ENCODE measurements at regions of chr17 and their contacts with region 1.

Region 1: GRCh38 chr17:46876353-46876887 is 25.0 kb downstream of the WNT9B start:
- DNase-seq: peak; percentile 62
- ATAC-seq: peak; percentile 93
- H3K4me3 Mint-ChIP-seq: no peak overlapping the region
- H3K27ac Mint-ChIP-seq: no peak overlapping the region
- H3K4me1 Mint-ChIP-seq: no peaks in the 10 kb centered on the region
- H3K27me3 Mint-ChIP-seq: no peaks in the 10 kb centered on the region
- CTCF ChIP-seq: peak; percentile 43; the same call in 1 of the 2 replicates

Region 2: DNA sequence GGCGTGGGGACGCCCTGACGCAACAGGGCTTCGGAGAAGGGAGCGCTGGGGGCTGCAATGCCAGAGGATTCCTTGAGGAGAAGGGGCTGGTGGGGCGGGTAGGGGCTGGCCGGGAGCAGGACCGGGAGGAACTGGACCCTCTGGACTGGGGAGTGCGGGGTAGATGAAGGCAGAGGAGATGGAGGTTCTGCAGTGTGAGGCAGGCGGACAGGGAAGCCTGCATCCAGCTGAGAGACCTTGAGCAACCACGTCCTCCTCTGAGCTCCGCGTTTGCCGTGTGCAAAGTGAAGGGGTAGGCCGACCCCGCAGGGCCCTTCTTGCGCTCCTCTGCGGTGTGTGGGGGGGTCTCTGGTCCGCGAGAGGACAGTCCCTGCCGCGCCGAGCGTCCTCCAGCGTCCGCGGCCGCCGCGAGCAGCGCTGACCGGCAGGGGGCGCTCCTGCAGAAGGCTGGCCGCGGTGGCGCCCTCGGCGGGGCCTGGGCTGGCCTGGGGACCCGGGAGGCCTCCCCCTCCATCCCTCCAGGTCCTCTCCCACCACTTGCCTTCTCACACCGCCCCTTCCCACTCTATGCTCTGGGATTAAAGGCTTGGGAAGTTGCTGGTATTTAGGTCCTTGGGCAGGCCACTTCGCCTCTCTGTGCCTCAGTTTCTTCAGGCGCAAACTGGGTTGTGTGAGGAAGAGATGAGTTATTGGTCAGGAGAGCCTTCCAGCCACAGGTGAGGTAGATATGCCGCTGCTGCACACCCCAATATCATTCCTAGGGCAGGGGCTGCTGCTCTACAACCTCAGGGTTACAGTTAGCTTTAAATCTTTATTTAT is 34.6 kb before region 1 on chr17:
- CTCF ChIA-PET with region 1: interaction called, 13 read pairs
- POLR2A ChIA-PET with region 1: no interaction called
- DNase-seq: peak; percentile 78
- ATAC-seq: peak; percentile 92
- H3K4me3 Mint-ChIP-seq: peak overlapping the region; percentile 56
- H3K27ac Mint-ChIP-seq: no peak overlapping the region
- H3K4me1 Mint-ChIP-seq: peaks cover 3% of the 10 kb centered on the region; the same call in 1 of the 2 replicates
- H3K27me3 Mint-ChIP-seq: peaks cover 44% of the 10 kb centered on the region
- CTCF ChIP-seq: peak; percentile 96

Region 3: GRCh38 chr17:46865100-46865499 is 11.3 kb before region 1 on chr17:
- CTCF ChIA-PET with region 1: interaction called, 16 read pairs
- POLR2A ChIA-PET with region 1: no interaction called
- DNase-seq: no peak
- ATAC-seq: peak; percentile 63
- H3K4me3 Mint-ChIP-seq: no peak overlapping the region
- H3K27ac Mint-ChIP-seq: no peak overlapping the region
- H3K4me1 Mint-ChIP-seq: peaks cover 22% of the 10 kb centered on the region
- H3K27me3 Mint-ChIP-seq: peaks cover 6% of the 10 kb centered on the region
- CTCF ChIP-seq: no peak

Region 4: GRCh38 chr17:46917516-46917915 is 41.1 kb after region 1 on chr17:
- CTCF ChIA-PET with region 1: interaction called, 10 read pairs
- POLR2A ChIA-PET with region 1: no interaction called
- DNase-seq: no peak
- ATAC-seq: peak; percentile 78
- H3K4me3 Mint-ChIP-seq: no peak overlapping the region
- H3K27ac Mint-ChIP-seq: no peak overlapping the region
- H3K4me1 Mint-ChIP-seq: no peaks in the 10 kb centered on the region
- H3K27me3 Mint-ChIP-seq: 0 out of 2 replicates have a peak, but pooled peaks cover 3% of the 10 kb centered on the region
- CTCF ChIP-seq: no peak

Measured in WTC11 (cell line).